ENCODE measurements at regions of chr9 and their contacts with region 1.

Region 1: GRCh38 chr9:91193658-91194391 is 167.9 kb downstream of the AUH start:
- DNase-seq: peak; percentile 95
- H3K4me3 Mint-ChIP-seq: peak overlapping the region; percentile 85
- H3K27ac Mint-ChIP-seq: peak overlapping the region; percentile 99
- H3K4me1 Mint-ChIP-seq: peaks cover 71% of the 10 kb centered on the region
- H3K27me3 Mint-ChIP-seq: no peaks in the 10 kb centered on the region

Region 2: DNA sequence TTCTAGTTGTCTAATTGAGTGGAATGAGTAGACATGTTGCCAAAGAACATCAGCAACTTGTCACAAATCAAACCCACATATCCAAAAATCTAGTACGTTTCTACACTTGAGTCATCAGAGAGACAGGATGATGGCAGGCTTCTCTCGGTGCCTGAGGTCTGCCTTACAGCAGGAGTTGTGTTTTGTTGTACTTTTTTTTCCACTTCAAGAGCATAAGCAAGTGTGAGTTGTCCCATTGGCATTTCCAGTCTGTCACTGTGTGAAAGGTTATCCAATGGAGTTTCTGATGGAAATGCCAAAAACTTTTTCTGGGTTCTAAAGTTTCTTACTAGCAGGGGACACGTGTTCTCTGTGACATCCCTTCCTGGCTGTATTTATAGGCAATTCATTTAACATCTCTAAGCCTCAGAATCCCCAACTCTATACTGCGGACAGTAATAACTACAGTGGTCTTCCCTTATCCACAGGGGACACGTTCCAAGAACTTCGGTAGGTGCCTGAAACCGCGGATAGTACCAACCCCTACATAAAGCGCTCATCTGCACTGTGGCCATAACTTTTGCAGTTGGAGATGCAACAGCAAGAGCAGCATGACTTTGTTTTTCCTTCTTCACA is 145.7 kb before region 1 on chr9:
- intact Hi-C with region 1: loop called (anchors 1 kb)
- DNase-seq: peak; percentile 83
- H3K4me3 Mint-ChIP-seq: peak overlapping the region; percentile 72
- H3K27ac Mint-ChIP-seq: peak overlapping the region; percentile 93
- H3K4me1 Mint-ChIP-seq: peaks cover 64% of the 10 kb centered on the region
- H3K27me3 Mint-ChIP-seq: no peaks in the 10 kb centered on the region

Region 3: DNA sequence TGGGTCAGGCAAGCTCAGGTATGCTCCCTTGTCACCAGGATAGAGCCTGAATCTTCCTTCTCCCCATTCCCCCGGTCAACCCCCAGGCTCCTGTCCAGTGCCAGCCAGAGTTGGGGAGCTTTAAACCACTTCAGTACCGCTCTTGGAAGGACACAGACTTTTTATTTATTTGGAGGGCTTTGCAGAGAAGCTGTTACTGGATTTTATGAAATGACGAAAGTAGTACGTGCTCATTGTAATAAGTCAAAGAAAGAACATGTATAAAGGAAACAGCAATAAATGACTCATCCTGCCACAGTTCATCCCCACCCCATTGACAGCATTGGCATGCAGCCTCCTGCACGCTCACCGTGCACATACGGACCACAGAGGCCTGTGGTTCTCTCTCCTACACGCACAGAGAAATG is 62.4 kb before region 1 on chr9:
- intact Hi-C with region 1: loop called (anchors 1 kb)
- DNase-seq: peak; percentile 93
- H3K4me3 Mint-ChIP-seq: peak overlapping the region; percentile 69
- H3K27ac Mint-ChIP-seq: peak overlapping the region; percentile 93
- H3K4me1 Mint-ChIP-seq: peaks cover 45% of the 10 kb centered on the region
- H3K27me3 Mint-ChIP-seq: no peaks in the 10 kb centered on the region

Region 4: GRCh38 chr9:91177661-91178280 is 16.1 kb before region 1 on chr9:
- intact Hi-C with region 1: loop called (anchors 1 kb)
- DNase-seq: peak; percentile 81
- H3K4me3 Mint-ChIP-seq: peak overlapping the region; percentile 56
- H3K27ac Mint-ChIP-seq: peak overlapping the region; percentile 98
- H3K4me1 Mint-ChIP-seq: peaks cover 58% of the 10 kb centered on the region
- H3K27me3 Mint-ChIP-seq: no peaks in the 10 kb centered on the region

Region 5: DNA sequence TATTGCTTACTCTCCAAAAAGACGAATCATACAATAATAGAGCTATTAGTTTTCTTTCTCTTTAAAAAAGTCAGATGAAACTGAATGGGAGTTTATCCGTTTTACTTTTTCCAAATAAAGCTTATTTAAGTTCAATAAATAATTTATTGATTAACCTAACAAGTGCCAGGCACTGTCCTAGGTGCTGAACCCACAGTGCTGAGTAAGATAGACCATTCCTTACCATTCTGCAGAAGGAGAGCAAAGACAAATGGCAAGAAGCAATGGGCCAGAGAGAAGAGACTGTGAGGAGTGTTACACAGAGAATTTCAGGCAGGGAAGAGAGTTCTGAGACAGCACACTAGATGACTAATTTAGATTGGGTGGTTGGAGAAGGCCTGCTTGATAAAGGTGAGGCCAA is 40.7 kb after region 1 on chr9:
- intact Hi-C with region 1: no loop called
- DNase-seq: no peak
- H3K4me3 Mint-ChIP-seq: no peak overlapping the region
- H3K27ac Mint-ChIP-seq: no peak overlapping the region
- H3K4me1 Mint-ChIP-seq: peaks cover 2% of the 10 kb centered on the region
- H3K27me3 Mint-ChIP-seq: no peaks in the 10 kb centered on the region

Region 6: GRCh38 chr9:91359734-91360470 is 166.1 kb after region 1 on chr9:
- intact Hi-C with region 1: loop called (anchors 1 kb)
- DNase-seq: peak; percentile 74
- H3K4me3 Mint-ChIP-seq: peak overlapping the region; percentile 93
- H3K27ac Mint-ChIP-seq: peak overlapping the region; percentile 99
- H3K4me1 Mint-ChIP-seq: peaks cover 58% of the 10 kb centered on the region
- H3K27me3 Mint-ChIP-seq: no peaks in the 10 kb centered on the region

Region 7: GRCh38 chr9:91711755-91712601 is 518.2 kb after region 1 on chr9:
- intact Hi-C with region 1: loop called (anchors 5 kb)
- DNase-seq: peak; percentile 90
- H3K4me3 Mint-ChIP-seq: no peak overlapping the region
- H3K27ac Mint-ChIP-seq: no peak overlapping the region
- H3K4me1 Mint-ChIP-seq: peaks cover 4% of the 10 kb centered on the region
- H3K27me3 Mint-ChIP-seq: peaks cover 13% of the 10 kb centered on the region

Measured in activated CD4-positive, alpha-beta T cell treated with anti-CD3 and anti-CD28 coated beads, Interleukin-2, amount 10 ng/mL, durations not matched to agents 24 days and 14 days (primary cell).